ENCODE measurements at regions of chr4 and their contacts with region 1.

Region 1: DNA sequence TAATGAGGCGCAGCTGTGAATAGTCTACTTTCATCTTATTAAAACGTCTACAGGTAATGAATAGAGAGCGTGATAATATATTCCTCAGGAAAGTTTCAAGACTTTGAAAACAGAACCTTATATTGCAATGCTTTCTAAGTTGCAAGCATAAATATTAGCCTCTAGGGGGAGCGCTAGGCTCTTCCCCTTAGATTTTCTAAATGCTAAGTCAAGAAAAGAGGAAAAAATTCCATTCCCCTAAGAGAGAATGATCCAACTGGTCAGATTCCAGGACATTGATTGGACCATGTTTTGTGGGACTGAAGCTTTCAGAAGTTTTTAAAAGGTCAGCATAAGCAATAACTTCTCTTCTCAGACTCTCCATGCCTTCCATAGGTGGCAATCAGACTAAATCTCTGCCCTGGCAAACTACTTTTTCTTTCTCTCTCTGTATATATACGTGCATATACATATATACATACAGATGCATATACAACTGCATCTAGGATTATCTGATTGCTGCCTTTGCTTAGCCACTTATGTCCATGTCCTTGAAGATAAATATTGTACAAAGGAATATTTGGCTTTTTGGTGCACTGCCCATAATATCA is 492.9 kb downstream of the INPP4B start:
- DNase-seq: peak in 1 of 5 donors; percentile 22
- H3K4me3 ChIP-seq: no peak overlapping the region
- H3K27ac ChIP-seq: no peak overlapping the region
- H3K4me1 ChIP-seq: peaks cover 3% of the 10 kb centered on the region
- H3K27me3 ChIP-seq: no peaks in the 10 kb centered on the region
- CTCF ChIP-seq: peak; percentile 47 to 58 (median 55)
- EP300 ChIP-seq: no peak
- POLR2A ChIP-seq: no peak

Region 2: DNA sequence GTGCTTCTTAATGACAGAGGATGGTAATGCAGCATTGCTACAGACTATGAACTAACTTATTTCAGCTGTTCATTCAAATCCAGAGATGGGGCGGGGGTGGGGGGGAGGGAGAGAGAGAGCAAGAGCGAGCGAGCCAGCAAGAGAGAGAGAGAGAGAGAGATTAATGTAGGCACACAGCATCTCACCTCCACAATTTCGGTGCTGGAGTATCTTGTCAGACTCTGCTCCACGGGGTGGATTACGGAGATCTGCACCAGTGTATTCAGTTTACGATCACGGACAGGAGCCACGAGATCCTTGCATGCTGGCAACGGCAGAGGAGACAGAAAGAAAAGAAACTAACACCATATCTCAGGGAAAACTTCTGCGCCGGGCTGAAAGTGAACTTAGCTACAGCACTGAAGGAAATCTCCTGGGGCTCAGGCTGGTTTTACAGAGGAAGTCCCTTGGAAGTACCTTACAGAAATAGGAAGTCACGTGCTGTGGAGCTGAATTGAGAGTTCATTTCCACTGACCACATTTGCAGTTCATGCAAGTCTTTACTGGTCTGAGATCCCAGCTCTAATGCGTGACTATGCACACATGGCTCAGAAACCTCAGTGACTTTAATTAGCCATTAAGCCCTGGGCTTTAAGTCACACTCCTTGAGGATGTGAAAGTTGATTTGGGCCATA is 51.9 kb after region 1 on chr4:
- intact Hi-C with region 1: loop called in 1 of 4 experiments (anchors 10 kb)
- DNase-seq: peak; percentile 27 to 48 (median 40)
- H3K4me3 ChIP-seq: peak overlapping the region; percentile 45
- H3K27ac ChIP-seq: peak overlapping the region; percentile 9 to 57
- H3K4me1 ChIP-seq: peaks cover 2% of the 10 kb centered on the region
- H3K27me3 ChIP-seq: no peaks in the 10 kb centered on the region
- CTCF ChIP-seq: no peak
- EP300 ChIP-seq: no peak
- POLR2A ChIP-seq: no peak

Region 3: DNA sequence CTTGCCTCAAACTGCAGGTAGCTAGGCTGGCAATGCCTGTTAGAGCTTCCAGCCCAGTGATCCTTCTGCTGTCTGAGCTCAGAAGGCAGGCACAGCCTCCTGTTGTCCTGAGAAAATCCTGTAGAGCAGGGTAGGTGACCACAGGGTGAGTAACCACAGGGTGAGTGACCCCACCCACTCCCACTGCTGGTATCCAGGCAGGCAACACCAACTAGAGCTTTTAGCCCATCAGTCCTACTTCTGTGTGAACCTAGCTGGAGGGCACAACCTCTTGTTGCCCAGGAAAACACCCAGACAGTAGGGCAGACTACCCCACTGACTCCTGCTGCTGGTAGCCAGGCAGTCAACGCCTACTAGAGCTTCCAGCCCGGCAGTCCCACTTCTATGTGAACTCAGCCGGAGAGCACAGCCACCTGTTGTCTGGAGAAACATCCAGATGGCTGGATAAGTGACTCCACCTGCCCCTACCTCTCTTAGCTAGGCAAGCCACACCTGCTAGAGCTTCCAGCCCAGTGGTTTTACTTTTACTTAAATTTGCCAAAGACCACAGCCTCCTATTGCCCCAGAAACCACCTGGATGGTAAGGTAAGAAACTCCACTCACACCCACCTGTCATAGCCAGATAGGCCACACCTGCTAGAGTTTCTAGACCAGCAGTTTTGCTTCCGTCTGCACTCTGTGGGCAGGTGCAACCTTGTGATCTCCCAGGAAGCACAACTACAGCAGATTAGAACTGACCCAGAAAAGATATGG is 121.3 kb after region 1 on chr4:
- intact Hi-C with region 1: no loop called
- DNase-seq: no peak
- H3K4me3 ChIP-seq: no peak overlapping the region
- H3K27ac ChIP-seq: no peak overlapping the region
- H3K4me1 ChIP-seq: no peaks in the 10 kb centered on the region
- H3K27me3 ChIP-seq: no peaks in the 10 kb centered on the region
- CTCF ChIP-seq: no peak
- EP300 ChIP-seq: no peak
- POLR2A ChIP-seq: no peak

Region 4: GRCh38 chr4:142846729-142847596 is 493.7 kb after region 1 on chr4:
- intact Hi-C with region 1: loop called in 2 of 4 experiments (anchors 10 kb)
- DNase-seq: peak; percentile 19 to 49 (median 28)
- H3K4me3 ChIP-seq: peak overlapping the region; percentile 65
- H3K27ac ChIP-seq: peak overlapping the region in 1 of 2 donors; percentile 44
- H3K4me1 ChIP-seq: peaks cover 3% of the 10 kb centered on the region
- H3K27me3 ChIP-seq: no peaks in the 10 kb centered on the region
- CTCF ChIP-seq: no peak
- EP300 ChIP-seq: no peak
- POLR2A ChIP-seq: no peak

Measured in ovary (tissue), 10 donors.